ENCODE measurements at regions of chr4 and their contacts with region 1.

Region 1: DNA sequence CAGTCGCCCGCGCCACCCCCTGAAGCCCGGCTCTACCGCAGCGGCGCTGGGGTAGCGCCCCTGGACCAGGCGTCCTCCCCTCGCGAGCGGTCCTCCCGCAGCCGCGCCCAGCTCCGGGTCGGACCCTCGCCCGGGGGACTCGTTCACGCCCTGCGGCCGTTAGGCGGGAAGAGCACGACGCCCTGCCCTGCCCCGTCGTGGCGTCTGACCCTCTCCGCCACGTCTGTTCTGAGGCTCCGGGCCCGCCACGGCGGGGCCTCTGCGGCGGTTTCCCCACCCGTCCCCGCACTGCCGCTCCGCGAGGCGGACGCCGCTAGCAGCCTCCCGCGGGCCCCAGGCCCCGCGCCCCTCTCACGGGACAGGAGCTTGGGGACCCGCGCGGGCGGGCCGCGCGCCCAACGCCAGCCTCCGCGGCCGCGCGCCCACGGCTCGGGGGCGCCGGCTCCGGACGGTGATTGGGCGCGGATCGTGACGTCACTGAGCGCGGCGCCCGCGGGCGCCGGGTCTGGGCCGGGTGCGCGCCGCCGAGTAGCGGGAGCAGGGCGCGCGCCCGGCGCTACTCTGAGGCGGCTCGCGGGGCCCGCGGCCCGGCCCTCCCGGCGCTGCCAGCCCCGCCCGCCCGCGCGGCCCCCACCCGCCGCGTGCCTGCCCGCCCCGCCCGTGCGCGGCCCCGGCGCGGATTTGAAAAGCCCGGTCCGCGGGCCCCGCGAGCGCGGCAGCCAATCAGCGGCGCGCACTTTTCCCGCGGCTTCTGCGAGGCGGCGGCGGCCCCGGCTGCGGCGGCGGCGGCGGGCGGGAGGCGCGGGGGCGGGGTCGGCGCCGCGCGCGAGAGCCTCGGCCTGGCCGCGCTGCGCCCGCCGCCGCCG is at the start of gene NSD2:
- DNase-seq: peak; percentile 90
- ATAC-seq: peak; percentile 66
- H3K4me3 Mint-ChIP-seq: peak within 1 kb of the TSS; percentile 86
- H3K27ac Mint-ChIP-seq: peak within 1 kb of the TSS; percentile 91
- H3K4me1 Mint-ChIP-seq: peaks cover 27% of the 10 kb centered on the region
- H3K27me3 Mint-ChIP-seq: no peaks in the 10 kb centered on the region
- CTCF ChIP-seq: no peak
- total RNA-seq, gene NSD2: 40.3 and 44.6 TPM in 2 replicates

Region 2: DNA sequence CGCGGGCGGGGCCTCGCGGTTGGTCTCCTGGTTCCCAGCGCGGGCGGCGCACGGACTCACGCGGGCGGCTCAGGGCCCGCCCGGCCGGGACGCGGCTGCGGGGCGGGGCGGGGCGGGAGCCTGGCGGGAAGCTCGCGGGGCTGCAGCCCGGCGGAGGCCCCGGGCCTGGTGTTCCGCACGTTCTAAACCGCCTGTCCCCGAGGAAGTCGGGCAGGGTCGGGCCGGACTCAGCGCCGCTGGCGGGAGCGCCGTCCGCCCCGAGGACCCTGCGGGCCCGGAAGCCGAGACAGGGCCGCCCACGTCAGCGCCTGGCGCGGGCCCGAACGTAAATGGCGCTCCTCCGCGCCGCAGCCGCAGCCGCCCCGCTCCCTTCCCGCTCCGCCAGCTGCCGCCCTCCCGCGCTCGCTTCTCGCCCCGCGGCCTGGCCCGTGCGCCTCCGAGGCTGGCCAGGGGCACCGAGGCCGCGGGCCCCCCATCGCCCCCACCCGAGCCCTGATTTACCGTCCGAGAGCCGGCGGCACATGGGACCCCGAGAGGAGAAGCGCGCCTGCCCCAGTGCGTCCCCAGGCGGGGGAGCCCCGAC is 621.6 kb before region 1 on chr4:
- CTCF ChIA-PET with region 1: no interaction called
- POLR2A ChIA-PET with region 1: no interaction called
- intact Hi-C with region 1: loop called (anchors 1 kb)
- DNase-seq: peak; percentile 87
- ATAC-seq: peak; percentile 70
- H3K4me3 Mint-ChIP-seq: peak overlapping the region; percentile 88
- H3K27ac Mint-ChIP-seq: peak overlapping the region; percentile 93
- H3K4me1 Mint-ChIP-seq: peaks cover 59% of the 10 kb centered on the region
- H3K27me3 Mint-ChIP-seq: no peaks in the 10 kb centered on the region
- CTCF ChIP-seq: no peak

Region 3: DNA sequence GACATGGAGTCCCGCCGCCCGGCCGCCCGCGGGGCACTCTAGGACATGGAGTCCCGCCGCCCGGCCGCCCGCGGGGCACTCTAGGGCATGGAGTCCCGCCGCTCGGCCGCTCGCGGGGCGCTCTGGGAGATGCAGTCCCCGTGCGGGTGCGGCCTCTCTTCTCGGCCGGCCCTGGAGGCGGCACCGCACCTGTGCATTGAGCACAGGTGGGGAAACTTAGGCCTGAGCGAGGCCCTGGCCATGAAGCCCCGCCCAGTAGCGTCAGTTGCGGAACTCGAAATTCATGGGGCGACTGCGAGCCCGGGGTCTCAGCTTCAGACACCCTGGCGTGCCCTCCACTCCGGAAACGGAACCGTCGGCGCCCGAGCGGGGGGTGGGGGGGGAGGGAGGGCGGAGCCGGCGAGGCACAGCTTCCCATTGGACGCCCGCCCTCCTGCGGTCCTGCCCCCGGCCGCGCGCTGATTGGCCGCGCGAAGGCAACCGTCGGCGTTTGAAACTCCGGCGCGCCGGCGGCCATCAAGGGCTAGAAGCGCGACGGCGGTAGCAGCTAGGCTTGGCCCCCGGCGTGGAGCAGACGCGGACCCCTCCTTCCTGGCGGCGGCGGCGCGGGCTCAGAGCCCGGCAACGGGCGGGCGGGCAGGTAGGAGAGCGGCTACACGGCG is 149.7 kb before region 1 on chr4 and contains the starts of genes TACC3 and TMEM129:
- CTCF ChIA-PET with region 1: interaction called, 3 read pairs
- POLR2A ChIA-PET with region 1: interaction called, 10 read pairs
- intact Hi-C with region 1: no loop called
- DNase-seq: peak; percentile 87
- ATAC-seq: peak; percentile 83
- H3K4me3 Mint-ChIP-seq: peak within 1 kb of the TSS; percentile 89
- H3K27ac Mint-ChIP-seq: peak within 1 kb of the TSS; percentile 92
- H3K4me1 Mint-ChIP-seq: peaks cover 64% of the 10 kb centered on the region
- H3K27me3 Mint-ChIP-seq: no peaks in the 10 kb centered on the region
- CTCF ChIP-seq: no peak
- total RNA-seq, gene TACC3: 16.1 and 20.5 TPM in 2 replicates
- total RNA-seq, gene TMEM129: 23.6 and 23.7 TPM in 2 replicates

Region 4: GRCh38 chr4:1856042-1856788 is 14.6 kb before region 1 on chr4 and contains the start of gene LETM1:
- CTCF ChIA-PET with region 1: interaction called, 6 read pairs
- POLR2A ChIA-PET with region 1: interaction called, 35 read pairs
- intact Hi-C with region 1: loop called (anchors 1 kb)
- DNase-seq: peak; percentile 90
- ATAC-seq: peak; percentile 95
- H3K4me3 Mint-ChIP-seq: peak within 1 kb of the TSS; percentile 83
- H3K27ac Mint-ChIP-seq: peak within 1 kb of the TSS; percentile 75
- H3K4me1 Mint-ChIP-seq: peaks cover 23% of the 10 kb centered on the region
- H3K27me3 Mint-ChIP-seq: no peaks in the 10 kb centered on the region
- CTCF ChIP-seq: no peak
- total RNA-seq, gene LETM1: 52.5 and 60.3 TPM in 2 replicates

Region 5: GRCh38 chr4:1882850-1883271 is 12.1 kb after region 1 on chr4:
- CTCF ChIA-PET with region 1: no interaction called
- POLR2A ChIA-PET with region 1: no interaction called
- intact Hi-C with region 1: no loop called
- DNase-seq: no peak
- ATAC-seq: no peak
- H3K4me3 Mint-ChIP-seq: no peak overlapping the region
- H3K27ac Mint-ChIP-seq: no peak overlapping the region
- H3K4me1 Mint-ChIP-seq: peaks cover 28% of the 10 kb centered on the region
- H3K27me3 Mint-ChIP-seq: no peaks in the 10 kb centered on the region
- CTCF ChIP-seq: no peak

Region 6: GRCh38 chr4:2008875-2009703 is 138.3 kb after region 1 on chr4 and contains the start of gene NELFA:
- CTCF ChIA-PET with region 1: no interaction called
- POLR2A ChIA-PET with region 1: no interaction called
- intact Hi-C with region 1: loop called (anchors 5 kb)
- DNase-seq: peak; percentile 93
- ATAC-seq: peak; percentile 80
- H3K4me3 Mint-ChIP-seq: peak within 1 kb of the TSS; percentile 90
- H3K27ac Mint-ChIP-seq: peak within 1 kb of the TSS; percentile 91
- H3K4me1 Mint-ChIP-seq: peaks cover 32% of the 10 kb centered on the region
- H3K27me3 Mint-ChIP-seq: peaks cover 4% of the 10 kb centered on the region
- CTCF ChIP-seq: no peak
- total RNA-seq, gene NELFA: 44.7 and 49.9 TPM in 2 replicates